ENCODE measurements at regions of chr9 and their contacts with region 1.

Region 1: DNA sequence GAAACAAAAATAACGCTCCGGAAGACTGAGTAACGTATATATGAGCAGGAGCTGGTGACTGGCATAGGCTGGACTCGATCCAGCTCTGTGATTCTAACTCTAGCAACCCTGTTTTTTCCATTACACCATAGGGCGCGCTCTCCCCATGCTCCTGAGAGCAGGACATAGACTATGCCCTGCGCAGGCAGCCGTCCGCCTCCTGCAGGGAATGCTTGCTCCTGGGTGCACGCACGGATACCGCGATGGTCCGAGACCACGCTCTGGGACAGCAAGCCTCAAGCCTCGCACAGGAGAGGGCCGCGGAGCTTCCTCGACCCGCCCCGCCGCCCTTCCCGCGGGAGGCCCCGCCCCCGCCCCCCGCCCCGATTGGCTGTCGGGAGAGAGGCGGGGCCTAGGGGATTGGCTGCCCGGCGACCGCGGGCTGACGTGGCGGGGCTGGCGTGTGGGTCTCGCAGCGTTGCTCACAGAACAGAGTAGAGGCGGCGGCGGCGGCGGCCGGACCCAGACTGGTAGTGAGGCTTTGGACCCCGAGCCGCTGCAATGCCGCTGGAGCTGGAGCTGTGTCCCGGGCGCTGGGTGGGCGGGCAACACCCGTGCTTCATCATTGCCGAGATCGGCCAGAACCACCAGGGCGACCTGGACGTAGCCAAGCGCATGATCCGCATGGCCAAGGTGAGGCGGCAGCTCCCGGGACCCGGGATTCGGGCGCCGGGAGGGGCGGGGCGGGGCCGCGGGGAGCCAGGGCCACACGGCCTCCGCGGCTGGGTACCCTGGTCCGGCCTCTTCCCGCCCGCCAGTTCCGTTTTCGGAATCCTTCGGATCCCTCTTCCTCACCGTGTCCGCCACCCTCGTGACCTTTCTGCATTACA is at the start of gene NANS:
- DNase-seq: peak; percentile 96 to 98
- ATAC-seq: peak; percentile 98
- H3K4me3 ChIP-seq: peak within 1 kb of the TSS; percentile 56 to 71
- H3K27ac ChIP-seq: peak within 1 kb of the TSS; percentile 89 to 94
- H3K4me1 ChIP-seq: no peaks in the 10 kb centered on the region
- H3K27me3 ChIP-seq: no peaks in the 10 kb centered on the region
- total RNA-seq, gene NANS: 40.8 to 47.3 TPM

Region 2: DNA sequence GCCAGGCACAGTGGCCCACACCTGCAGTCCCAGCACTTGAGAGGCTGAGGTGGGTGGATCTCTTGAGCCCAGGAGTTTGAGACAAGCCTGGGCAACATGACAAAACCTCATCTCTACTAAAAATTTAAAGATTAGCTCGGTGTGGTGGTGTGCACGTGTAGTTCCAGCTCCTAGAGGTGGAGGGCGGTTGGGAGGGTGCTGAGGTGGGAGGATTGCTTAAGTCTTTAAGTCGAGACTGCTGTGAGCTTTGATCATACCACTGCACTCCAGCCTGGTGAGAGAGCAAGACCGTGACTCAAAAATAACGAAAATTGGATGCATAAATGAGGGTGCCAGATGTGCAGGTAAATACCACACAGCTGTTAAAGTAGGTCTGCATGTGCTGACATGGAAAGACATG is 683.9 kb before region 1 on chr9:
- intact Hi-C with region 1: no loop called
- DNase-seq: no peak
- ATAC-seq: no peak
- H3K4me3 ChIP-seq: no peak overlapping the region
- H3K27ac ChIP-seq: no peak overlapping the region
- H3K4me1 ChIP-seq: no peaks in the 10 kb centered on the region
- H3K27me3 ChIP-seq: no peaks in the 10 kb centered on the region

Region 3: GRCh38 chr9:98022447-98022846 is 34.1 kb before region 1 on chr9:
- intact Hi-C with region 1: loop called in 1 of 2 experiments (anchors 5 kb)
- DNase-seq: peak in 1 of 2 donors; percentile 76
- ATAC-seq: peak; percentile 65
- H3K4me3 ChIP-seq: no peak overlapping the region
- H3K27ac ChIP-seq: no peak overlapping the region
- H3K4me1 ChIP-seq: no peaks in the 10 kb centered on the region
- H3K27me3 ChIP-seq: no peaks in the 10 kb centered on the region

Region 4: DNA sequence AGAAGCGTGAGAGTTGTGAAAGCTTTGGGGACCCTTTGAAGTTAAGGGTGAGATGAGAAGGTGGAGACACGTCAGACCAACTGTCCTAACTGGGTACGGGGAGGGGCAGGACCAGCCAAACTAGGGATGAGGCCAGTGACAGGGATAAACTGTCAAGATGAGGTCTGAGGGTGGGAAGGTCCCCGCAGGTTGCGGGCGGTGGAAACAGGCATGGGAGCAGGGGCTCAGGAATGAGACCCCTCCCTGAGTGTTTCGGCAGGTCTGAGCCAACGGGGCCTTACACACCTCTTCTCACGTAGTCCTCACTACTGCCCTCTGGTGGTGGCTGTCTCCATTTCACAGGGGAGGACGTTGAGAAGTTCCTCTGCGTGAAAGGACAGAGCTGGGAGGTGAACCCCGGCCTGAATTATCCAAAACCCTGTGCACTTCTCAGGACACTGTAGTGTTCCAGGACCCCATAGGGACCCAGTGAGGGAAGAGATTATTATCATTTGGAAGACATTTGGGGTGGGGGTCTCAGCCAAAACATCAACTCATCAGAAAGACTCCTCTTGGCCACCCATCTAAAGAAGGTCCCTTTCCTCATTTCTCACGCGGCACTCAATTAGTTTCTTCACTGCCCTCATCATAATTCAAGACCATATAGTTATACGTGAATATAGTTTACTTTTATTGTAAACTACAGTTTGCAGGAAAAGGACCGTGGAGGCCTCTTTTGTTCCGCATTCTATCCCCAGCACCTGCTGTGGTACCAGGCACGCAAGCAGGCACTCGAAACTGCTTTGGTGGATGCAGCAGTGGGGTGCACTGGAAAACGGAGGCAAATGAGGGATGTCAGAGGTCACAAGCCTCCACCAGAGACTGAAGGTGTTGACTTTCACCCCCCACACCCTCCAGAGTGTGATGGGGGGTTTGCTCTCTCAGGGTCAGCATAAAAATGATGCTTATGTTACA is 21.6 kb before region 1 on chr9:
- intact Hi-C with region 1: loop called in 1 of 2 experiments (anchors 2 kb)
- DNase-seq: peak; percentile 89 to 92
- ATAC-seq: peak; percentile 89
- H3K4me3 ChIP-seq: no peak overlapping the region
- H3K27ac ChIP-seq: peak overlapping the region in 1 of 2 donors; percentile 53
- H3K4me1 ChIP-seq: no peaks in the 10 kb centered on the region
- H3K27me3 ChIP-seq: no peaks in the 10 kb centered on the region